ENCODE measurements at regions of chr12 and their contacts with region 1.

Region 1: DNA sequence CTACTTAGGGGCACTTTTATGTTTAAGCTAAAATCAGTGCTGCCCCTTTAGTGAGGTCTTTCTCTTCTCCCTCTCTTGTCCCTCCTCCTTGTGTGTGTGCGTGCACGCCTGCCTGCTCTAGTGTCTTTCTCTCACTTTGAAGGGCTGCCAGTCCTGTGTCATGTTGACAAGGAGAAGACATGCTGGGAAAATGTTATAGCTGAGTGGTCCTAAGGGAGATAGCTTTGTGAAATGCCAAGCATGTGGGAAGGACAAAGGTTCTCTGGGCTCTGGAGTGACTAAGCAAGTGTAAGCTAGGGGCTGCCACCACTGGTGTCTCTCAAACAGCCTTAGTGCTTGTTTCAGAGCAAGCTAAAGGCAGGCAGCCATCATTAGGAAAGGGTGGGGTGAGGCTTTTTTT is 108.4 kb downstream of the EMP1 start:
- DNase-seq: no peak
- H3K4me3 ChIP-seq: no peak overlapping the region
- H3K27ac ChIP-seq: no peak overlapping the region
- H3K4me1 ChIP-seq: no peaks in the 10 kb centered on the region
- H3K27me3 ChIP-seq: no peaks in the 10 kb centered on the region; a peak in 1 of 7 replicates
- CTCF ChIP-seq: no peak
- EP300 ChIP-seq: no peak
- POLR2A ChIP-seq: no peak
- RAD21 ChIP-seq: no peak

Region 2: GRCh38 chr12:13278249-13278787 is 26.6 kb before region 1 on chr12:
- CTCF ChIA-PET with region 1: interaction called, 12 read pairs
- POLR2A ChIA-PET with region 1: no interaction called
- DNase-seq: peak; percentile 47 to 88
- H3K4me3 ChIP-seq: no peak overlapping the region
- H3K27ac ChIP-seq: no peak overlapping the region
- H3K4me1 ChIP-seq: peaks cover 0 to 12% (median 3%) of the 10 kb centered on the region in 4 experiments; a peak in 3 of 7 replicates
- H3K27me3 ChIP-seq: peaks cover 0 to 8% (median 4%) of the 10 kb centered on the region in 4 experiments; a peak in 5 of 7 replicates
- CTCF ChIP-seq: peak; percentile 82 to 92 (median 84)
- EP300 ChIP-seq: no peak
- POLR2A ChIP-seq: no peak
- RAD21 ChIP-seq: peak; percentile 86 to 89